RWPE1 (cell line): ENCODE measurements at regions of chr18 and their contacts with region 1.

Region 1: DNA sequence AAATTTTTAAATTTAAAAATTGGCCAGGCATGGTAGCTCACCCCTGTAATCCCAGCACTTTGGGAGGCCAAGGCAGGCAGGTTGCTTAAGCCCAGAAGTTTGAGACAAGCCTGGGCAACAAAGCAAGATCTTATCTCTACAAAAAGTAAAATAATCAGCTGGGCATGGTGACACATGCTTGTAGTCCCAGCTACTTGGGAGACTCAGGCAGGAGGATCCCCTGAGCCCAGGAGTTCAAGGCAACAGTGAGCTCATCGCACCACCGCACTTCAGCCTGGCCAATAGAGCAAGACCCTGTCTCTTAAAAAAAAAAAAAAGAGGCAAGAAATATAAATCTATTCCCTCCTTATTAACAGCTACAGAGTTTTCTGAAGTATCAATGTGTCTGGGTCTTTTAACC is 51.9 kb downstream of the ESCO1 start:
- DNase-seq: no peak
- H3K27ac ChIP-seq: peak overlapping the region; percentile 35
- CTCF ChIP-seq: no peak

Region 2: GRCh38 chr18:21526463-21526862 is 22.2 kb before region 1 on chr18:
- CTCF ChIA-PET with region 1: no interaction called
- POLR2A ChIA-PET with region 1: interaction called, 11 read pairs
- DNase-seq: no peak
- H3K27ac ChIP-seq: no peak overlapping the region
- CTCF ChIP-seq: no peak

Region 3: GRCh38 chr18:21786526-21786925 is 237.9 kb after region 1 on chr18:
- CTCF ChIA-PET with region 1: no interaction called
- POLR2A ChIA-PET with region 1: no interaction called
- DNase-seq: no peak
- H3K27ac ChIP-seq: no peak overlapping the region
- CTCF ChIP-seq: no peak